ENCODE measurements at regions of chr1 and their contacts with region 1.

Region 1: DNA sequence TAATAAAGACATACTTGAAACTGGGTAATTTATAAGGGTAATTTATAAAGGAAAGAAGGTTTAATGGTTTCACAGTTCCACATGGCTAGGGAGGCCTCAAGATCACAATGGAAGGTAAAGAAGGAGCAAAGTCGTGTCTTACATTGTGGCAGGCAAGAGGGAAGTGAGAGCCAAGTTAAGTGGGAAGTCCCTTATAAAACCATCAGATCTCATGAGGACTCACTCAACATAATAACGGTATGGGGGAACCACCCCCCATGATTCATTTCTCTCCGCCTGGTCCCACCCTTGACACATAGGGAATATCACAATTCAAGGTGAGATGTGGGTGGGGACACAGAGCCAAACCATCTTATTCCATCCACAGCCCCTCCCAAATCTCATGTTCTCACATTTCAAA is 76.8 kb upstream of the ZNF678 start:
- DNase-seq: no peak
- H3K4me3 Mint-ChIP-seq: no peak overlapping the region
- H3K27ac Mint-ChIP-seq: no peak overlapping the region
- H3K4me1 Mint-ChIP-seq: no peaks in the 10 kb centered on the region
- H3K27me3 Mint-ChIP-seq: peaks cover 12% of the 10 kb centered on the region

Region 2: DNA sequence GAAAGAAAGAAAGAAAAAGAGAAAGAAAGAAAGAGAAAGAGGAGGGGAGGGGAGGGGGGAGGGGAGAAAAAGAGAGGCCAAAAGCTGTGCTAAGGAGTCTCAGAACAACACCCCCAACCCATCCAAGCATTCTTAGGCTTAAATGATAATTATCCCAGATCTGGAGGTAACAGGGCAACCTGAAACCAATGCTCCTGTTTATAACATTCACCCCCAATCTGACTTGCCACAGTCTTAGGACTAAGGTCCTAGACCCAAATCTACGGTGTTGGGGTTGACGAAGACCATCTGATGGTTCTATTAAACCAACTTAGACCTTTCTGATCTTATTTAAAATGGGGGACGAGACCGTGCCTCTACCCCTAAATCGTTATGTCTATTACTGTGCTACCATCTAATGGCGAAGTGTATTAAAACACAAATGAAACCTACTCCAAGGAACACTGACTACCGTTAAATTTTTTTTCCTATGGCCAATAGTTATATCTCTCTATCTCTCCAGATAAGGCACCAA is 49.0 kb before region 1 on chr1:
- intact Hi-C with region 1: no loop called
- DNase-seq: no peak
- H3K4me3 Mint-ChIP-seq: no peak overlapping the region
- H3K27ac Mint-ChIP-seq: no peak overlapping the region
- H3K4me1 Mint-ChIP-seq: no peaks in the 10 kb centered on the region
- H3K27me3 Mint-ChIP-seq: peaks cover 9% of the 10 kb centered on the region

Region 3: GRCh38 chr1:227542143-227543120 is 55.9 kb after region 1 on chr1:
- intact Hi-C with region 1: loop called (anchors 2 kb)
- DNase-seq: peak; percentile 87
- H3K4me3 Mint-ChIP-seq: peak overlapping the region; percentile 56
- H3K27ac Mint-ChIP-seq: peak overlapping the region; percentile 55
- H3K4me1 Mint-ChIP-seq: no peaks in the 10 kb centered on the region
- H3K27me3 Mint-ChIP-seq: no peaks in the 10 kb centered on the region

Region 4: GRCh38 chr1:227728059-227728891 is 241.7 kb after region 1 on chr1:
- intact Hi-C with region 1: loop called (anchors 2 kb)
- DNase-seq: peak; percentile 37
- H3K4me3 Mint-ChIP-seq: peak overlapping the region; percentile 85
- H3K27ac Mint-ChIP-seq: peak overlapping the region; percentile 72
- H3K4me1 Mint-ChIP-seq: peaks cover 5% of the 10 kb centered on the region
- H3K27me3 Mint-ChIP-seq: peaks cover 7% of the 10 kb centered on the region

Region 5: GRCh38 chr1:227946624-227947385 is 460.2 kb after region 1 on chr1:
- intact Hi-C with region 1: loop called (anchors 1 kb)
- DNase-seq: peak; percentile 31
- H3K4me3 Mint-ChIP-seq: peak overlapping the region; percentile 68
- H3K27ac Mint-ChIP-seq: no peak overlapping the region
- H3K4me1 Mint-ChIP-seq: no peaks in the 10 kb centered on the region
- H3K27me3 Mint-ChIP-seq: peaks cover 36% of the 10 kb centered on the region

Region 6: DNA sequence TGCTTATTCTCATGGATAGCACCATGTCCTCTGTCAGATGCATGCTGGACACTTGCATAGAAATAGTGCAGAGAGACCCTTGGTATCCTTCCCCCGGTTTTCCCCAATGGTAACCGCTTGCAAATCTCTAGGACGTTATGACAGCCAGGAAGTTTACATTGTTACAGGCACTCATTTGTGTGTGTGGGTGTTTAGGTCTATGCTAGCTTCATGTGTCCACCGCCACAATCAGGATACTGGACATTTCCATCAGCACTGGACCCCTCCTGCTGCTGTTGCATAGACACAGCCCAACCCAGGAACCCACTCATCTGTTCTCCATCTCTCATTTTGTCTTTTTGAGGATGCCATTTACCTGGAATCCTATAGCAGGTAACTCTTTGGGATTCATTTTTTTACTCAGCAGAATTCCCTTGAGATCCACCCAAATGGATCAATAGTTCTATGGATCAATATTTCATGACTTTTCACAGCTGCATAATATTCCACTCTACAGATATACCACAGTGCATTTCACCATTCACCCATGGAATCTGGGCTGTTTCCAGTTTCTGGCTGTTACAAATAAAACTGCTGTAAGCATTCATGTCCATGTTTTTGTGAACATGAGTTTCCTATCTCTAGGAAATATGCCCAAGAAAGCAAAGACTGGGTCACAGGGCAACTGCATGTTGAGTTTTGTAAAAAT is 467.7 kb after region 1 on chr1:
- intact Hi-C with region 1: loop called (anchors 1 kb)
- DNase-seq: no peak
- H3K4me3 Mint-ChIP-seq: no peak overlapping the region
- H3K27ac Mint-ChIP-seq: no peak overlapping the region
- H3K4me1 Mint-ChIP-seq: no peaks in the 10 kb centered on the region
- H3K27me3 Mint-ChIP-seq: peaks cover 28% of the 10 kb centered on the region

Measured in activated T-helper 1 cell treated with anti-CD3 and anti-CD28 coated beads, Interleukin-12 subunit alpha, Interleukin-12 subunit beta, Interleukin-2, Interleukin-4 antibody, amounts not matched to agents 30 ng/mL and 10 ng/mL and 1 ng/mL, durations not matched to agents 14 hours and 24 hours and 36 hours (primary cell).